GM10248 (cell line): ENCODE measurements at regions of chr15 and their contacts with region 1.

Region 1: DNA sequence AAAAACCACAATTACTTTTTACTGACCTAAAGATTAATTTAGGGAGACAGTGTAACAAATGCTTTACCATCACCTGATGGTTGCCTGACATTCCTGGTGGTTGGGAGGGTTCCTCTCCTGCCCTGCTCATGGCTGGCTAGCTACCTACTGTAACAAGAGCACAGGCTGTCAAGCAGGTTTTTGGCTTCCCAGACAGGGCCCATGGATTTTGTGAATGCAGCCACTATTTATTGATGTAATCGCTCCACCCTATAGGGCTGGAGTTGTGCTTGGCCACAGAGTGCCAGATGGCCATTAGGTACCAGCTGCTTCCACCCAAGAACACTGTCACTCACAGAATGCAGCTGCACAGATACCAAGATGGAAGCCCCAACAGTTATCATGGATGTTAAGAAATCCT is 31.0 kb upstream of the KLHL25 start:
- DNase-seq: no peak
- CTCF ChIP-seq: no peak

Region 2: DNA sequence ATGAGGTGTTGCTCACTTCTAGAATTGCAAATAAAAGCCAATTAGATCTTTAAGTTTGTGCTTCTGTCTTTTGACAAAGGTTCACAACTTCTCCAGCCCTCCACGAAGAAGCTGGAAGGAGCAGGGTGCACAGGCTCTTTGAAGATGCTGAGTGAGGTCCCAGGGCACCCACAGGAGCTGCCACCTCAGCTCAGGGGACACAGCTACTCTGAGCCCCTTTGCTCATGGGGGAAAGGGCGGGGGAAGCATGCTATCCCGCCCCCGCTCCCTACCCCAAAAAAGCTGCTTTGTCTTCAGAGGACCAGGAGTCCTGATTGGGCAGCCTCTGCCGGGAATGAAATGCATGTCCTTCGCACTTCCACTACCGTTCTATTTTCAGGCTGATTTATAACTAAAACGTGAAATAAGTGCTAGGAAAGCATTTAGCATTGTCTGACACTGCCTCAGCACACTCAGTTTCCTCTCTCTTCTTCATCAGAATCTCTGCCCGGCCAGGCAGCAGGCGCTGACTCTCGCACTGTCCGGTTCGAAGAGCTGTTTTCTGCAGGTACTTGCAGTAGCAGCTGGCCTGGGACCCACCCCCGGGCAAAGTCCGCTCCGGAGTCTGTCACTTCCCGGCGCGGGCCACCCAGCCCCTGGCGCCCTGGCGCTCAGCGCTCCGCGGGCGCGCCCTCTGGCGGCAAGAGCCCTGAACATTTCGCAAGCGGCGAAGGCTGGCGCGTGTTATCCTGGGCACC is 14.5 kb after region 1 on chr15:
- CTCF ChIA-PET with region 1: interaction called, 41 read pairs
- POLR2A ChIA-PET with region 1: interaction called, 6 read pairs
- DNase-seq: peak; percentile 88
- CTCF ChIP-seq: peak; percentile 94

Region 3: GRCh38 chr15:85955501-85956391 is 130.1 kb after region 1 on chr15:
- CTCF ChIA-PET with region 1: no interaction called
- POLR2A ChIA-PET with region 1: no interaction called
- DNase-seq: no peak
- CTCF ChIP-seq: no peak